Calu3 (cell line): ENCODE measurements at regions of chr2 and their contacts with region 1.

Region 1: GRCh38 chr2:31318361-31319336 is 84.7 kb downstream of the EHD3 start:
- DNase-seq: no peak
- H3K4me3 Mint-ChIP-seq: no peak overlapping the region
- H3K27ac Mint-ChIP-seq: no peak overlapping the region
- H3K4me1 Mint-ChIP-seq: peaks cover 5% of the 10 kb centered on the region
- H3K27me3 Mint-ChIP-seq: no peaks in the 10 kb centered on the region
- CTCF ChIP-seq: no peak

Region 2: GRCh38 chr2:30899516-30900054 is 419.1 kb before region 1 on chr2:
- CTCF ChIA-PET with region 1: interaction called, 10 read pairs
- intact Hi-C with region 1: no loop called
- DNase-seq: no peak
- H3K4me3 Mint-ChIP-seq: no peak overlapping the region
- H3K27ac Mint-ChIP-seq: no peak overlapping the region
- H3K4me1 Mint-ChIP-seq: no peaks in the 10 kb centered on the region
- H3K27me3 Mint-ChIP-seq: no peaks in the 10 kb centered on the region
- CTCF ChIP-seq: no peak

Region 3: DNA sequence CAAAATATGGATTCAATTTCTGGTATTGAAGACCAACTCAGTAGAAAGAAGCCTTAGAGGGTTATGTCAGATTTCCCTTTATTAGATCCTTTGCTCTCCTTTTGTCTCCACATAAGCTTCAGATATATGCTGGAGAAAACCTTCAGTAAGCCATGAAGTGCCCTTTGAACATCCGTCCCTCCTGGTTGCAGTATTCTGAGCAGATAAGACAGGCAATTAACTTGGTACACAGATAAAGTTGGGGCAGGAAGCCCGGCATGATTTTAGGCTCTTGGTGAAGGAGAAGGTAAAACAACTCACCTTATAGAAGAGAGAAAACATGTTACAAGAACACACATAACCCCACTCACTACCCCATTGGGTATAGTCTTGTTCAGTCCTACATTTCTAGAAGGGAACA is 185.7 kb after region 1 on chr2:
- CTCF ChIA-PET with region 1: no interaction called
- intact Hi-C with region 1: no loop called
- DNase-seq: no peak
- H3K4me3 Mint-ChIP-seq: no peak overlapping the region
- H3K27ac Mint-ChIP-seq: no peak overlapping the region
- H3K4me1 Mint-ChIP-seq: peaks cover 8% of the 10 kb centered on the region
- H3K27me3 Mint-ChIP-seq: no peaks in the 10 kb centered on the region
- CTCF ChIP-seq: no peak